ENCODE measurements at regions of chr3 and their contacts with region 1.

Region 1: GRCh38 chr3:129058441-129059200 is 2.0 kb upstream of the GP9 start:
- DNase-seq: peak; percentile 43
- H3K4me3 ChIP-seq: no peak overlapping the region
- H3K27ac ChIP-seq: no peak overlapping the region
- H3K4me1 ChIP-seq: no peaks in the 10 kb centered on the region
- H3K27me3 ChIP-seq: no peaks in the 10 kb centered on the region
- CTCF ChIP-seq: peak in 1 of 2 donors; percentile 9

Region 2: DNA sequence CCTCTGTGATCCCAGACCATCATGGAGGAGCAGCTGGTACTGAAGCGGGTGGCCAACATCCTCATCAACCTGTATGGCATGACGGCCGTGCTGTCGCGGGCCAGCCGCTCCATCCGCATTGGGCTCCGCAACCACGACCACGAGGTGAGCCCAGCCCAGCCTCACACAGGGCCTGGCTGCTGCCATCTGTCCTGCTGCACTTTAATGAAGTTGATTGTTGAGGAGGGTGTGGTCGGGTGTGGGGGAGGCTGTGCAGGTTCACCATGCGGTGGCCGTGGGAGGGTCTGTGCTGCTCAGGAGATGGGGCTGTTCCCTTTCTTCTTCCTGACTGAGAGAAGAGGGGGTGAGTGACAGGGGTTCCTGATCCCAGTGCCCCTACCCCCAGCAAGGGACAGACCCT is 148.6 kb before region 1 on chr3:
- CTCF ChIA-PET with region 1: no interaction called
- dilution Hi-C with region 1: loop called (anchors 5 kb)
- in situ Hi-C with region 1: no loop called
- intact Hi-C with region 1: no loop called
- DNase-seq: no peak
- H3K4me3 ChIP-seq: no peak overlapping the region
- H3K27ac ChIP-seq: no peak overlapping the region
- H3K4me1 ChIP-seq: no peaks in the 10 kb centered on the region
- H3K27me3 ChIP-seq: no peaks in the 10 kb centered on the region
- CTCF ChIP-seq: no peak

Region 3: DNA sequence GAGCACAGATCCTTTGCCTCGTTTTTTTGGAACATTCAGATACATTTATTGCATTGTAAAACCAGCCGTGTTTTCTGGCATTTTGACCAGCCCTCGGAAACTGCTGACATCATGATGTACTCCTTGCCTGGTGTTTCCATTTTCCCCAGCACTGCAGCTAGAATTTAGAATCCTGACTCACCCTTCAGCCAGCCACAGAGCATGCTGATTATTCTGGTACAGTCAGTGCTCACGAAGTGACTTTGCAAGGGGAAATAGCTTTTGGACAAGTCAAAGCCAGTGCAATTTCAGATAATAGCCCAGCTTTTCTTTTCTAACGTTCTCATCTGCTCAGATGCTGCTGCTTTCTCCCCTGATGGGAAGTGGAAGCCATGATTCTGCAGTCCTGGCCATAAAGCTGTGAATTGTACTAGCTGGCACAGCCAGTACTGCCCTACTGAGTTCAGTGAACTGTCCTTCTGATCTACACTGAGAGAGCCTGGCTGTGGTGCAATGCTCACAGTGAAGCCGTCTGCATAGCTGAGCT is 137.2 kb after region 1 on chr3:
- CTCF ChIA-PET with region 1: no interaction called
- dilution Hi-C with region 1: no loop called
- in situ Hi-C with region 1: no loop called
- intact Hi-C with region 1: no loop called
- DNase-seq: peak; percentile 89
- H3K4me3 ChIP-seq: peak overlapping the region in 2 of 3 experiments; percentile 5 to 16
- H3K27ac ChIP-seq: peak overlapping the region; percentile 33
- H3K4me1 ChIP-seq: peaks cover 28% of the 10 kb centered on the region
- H3K27me3 ChIP-seq: no peaks in the 10 kb centered on the region
- CTCF ChIP-seq: no peak